Common myeloid progenitor, CD34-positive (primary cell): ENCODE measurements at regions of chr19 and their contacts with region 1.

Region 1: DNA sequence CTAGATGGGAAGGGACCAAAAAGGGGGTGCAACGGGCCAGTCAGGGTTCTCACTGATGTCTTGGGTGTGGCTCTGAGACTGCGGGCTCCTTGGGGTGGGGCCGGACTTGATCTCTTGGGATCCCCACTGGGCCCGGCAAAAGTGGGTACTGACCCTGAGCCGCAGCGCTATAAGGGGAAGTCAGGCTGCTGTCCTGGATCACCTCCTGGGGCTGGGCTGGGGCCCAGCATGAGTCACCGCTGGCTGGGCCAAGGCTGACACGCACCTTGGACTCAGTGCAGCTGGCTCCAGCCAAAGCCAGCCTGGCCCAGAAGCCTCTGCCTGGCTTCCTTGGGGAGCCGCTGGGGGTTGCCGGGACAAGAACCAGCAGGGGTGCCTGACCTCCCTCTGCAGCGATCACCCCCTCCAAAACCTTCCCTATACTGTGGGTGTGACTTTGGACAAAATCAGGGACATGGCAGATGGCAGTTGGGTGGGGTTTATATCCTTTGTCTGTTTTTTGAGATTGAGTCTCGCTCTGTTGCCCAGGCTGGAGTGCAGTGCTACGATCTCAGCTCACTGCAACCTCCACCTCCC is 617 bp upstream of the IQCN start:
- DNase-seq: peak in 2 of 3 donors; percentile 70 to 83
- H3K4me3 ChIP-seq: peak overlapping the region in 1 of 7 experiments; percentile 28
- H3K27ac ChIP-seq: no peak overlapping the region
- H3K4me1 ChIP-seq: peaks cover 3 to 22% (median 10%) of the 10 kb centered on the region in 4 experiments
- H3K27me3 ChIP-seq: no peaks in the 10 kb centered on the region

Region 2: GRCh38 chr19:18174983-18175382 is 99.9 kb before region 1 on chr19:
- CTCF ChIA-PET with region 1: no interaction called
- POLR2A ChIA-PET with region 1: no interaction called
- DNase-seq: no peak
- H3K4me3 ChIP-seq: peak overlapping the region in 2 of 7 experiments; percentile 10 to 26
- H3K27ac ChIP-seq: no peak overlapping the region
- H3K4me1 ChIP-seq: peaks cover 0 to 45% (median 24%) of the 10 kb centered on the region in 4 experiments
- H3K27me3 ChIP-seq: peaks cover 0 to 3% (median 0%) of the 10 kb centered on the region in 5 experiments

Region 3: GRCh38 chr19:18259893-18260292 is 15.0 kb before region 1 on chr19:
- CTCF ChIA-PET with region 1: interaction called, 36 read pairs
- POLR2A ChIA-PET with region 1: interaction called, 3 read pairs
- DNase-seq: peak in 2 of 3 donors; percentile 6 to 14
- H3K4me3 ChIP-seq: no peak overlapping the region
- H3K27ac ChIP-seq: no peak overlapping the region
- H3K4me1 ChIP-seq: peaks cover 0 to 6% (median 3%) of the 10 kb centered on the region in 4 experiments
- H3K27me3 ChIP-seq: peaks cover 0 to 6% (median 0%) of the 10 kb centered on the region in 5 experiments

Region 4: DNA sequence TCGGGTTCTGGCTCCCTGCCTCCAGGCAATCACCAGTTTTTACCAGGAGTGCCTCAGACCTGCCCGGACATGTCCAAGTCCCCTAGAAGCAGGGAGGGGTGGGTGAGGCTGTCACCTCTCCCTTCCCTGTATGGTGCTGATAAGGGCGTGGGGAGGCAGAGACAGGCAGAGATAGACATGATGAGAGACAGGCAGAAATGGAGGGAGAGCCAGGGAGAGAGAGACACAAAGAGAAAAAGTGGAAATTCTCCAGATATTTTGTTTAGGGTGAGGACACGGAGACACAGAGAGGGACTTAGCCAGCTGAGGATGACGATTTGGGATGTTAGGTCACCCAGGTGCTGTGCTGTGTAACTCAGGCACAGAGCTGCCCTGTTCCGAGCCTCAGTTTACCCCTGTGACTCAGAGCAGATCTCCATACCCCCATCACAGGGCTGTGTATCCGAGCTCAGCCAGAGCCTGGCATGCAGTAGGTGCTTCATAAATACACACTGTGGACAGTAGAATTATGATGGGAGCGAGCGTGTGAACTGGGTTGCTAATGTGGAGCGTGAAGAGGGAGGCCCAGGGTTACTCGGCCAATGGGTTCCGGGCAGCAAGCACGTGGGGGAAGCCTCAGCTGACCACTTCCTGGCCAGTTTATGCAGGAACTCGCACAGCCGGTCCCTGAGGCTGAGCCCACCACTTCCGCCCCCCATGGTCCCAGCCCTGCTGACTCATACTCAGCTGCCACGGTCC is 99.2 kb after region 1 on chr19:
- CTCF ChIA-PET with region 1: no interaction called
- POLR2A ChIA-PET with region 1: no interaction called
- DNase-seq: peak; percentile 80 to 97 (median 95)
- H3K4me3 ChIP-seq: peak overlapping the region in 6 of 7 experiments; percentile 5 to 57 (median 38)
- H3K27ac ChIP-seq: peak overlapping the region; percentile 61 to 90
- H3K4me1 ChIP-seq: peaks cover 4 to 45% (median 30%) of the 10 kb centered on the region in 4 experiments
- H3K27me3 ChIP-seq: no peaks in the 10 kb centered on the region